Ovary (tissue), 10 donors: ENCODE measurements at regions of chr10 and their contacts with region 1.

Region 1: DNA sequence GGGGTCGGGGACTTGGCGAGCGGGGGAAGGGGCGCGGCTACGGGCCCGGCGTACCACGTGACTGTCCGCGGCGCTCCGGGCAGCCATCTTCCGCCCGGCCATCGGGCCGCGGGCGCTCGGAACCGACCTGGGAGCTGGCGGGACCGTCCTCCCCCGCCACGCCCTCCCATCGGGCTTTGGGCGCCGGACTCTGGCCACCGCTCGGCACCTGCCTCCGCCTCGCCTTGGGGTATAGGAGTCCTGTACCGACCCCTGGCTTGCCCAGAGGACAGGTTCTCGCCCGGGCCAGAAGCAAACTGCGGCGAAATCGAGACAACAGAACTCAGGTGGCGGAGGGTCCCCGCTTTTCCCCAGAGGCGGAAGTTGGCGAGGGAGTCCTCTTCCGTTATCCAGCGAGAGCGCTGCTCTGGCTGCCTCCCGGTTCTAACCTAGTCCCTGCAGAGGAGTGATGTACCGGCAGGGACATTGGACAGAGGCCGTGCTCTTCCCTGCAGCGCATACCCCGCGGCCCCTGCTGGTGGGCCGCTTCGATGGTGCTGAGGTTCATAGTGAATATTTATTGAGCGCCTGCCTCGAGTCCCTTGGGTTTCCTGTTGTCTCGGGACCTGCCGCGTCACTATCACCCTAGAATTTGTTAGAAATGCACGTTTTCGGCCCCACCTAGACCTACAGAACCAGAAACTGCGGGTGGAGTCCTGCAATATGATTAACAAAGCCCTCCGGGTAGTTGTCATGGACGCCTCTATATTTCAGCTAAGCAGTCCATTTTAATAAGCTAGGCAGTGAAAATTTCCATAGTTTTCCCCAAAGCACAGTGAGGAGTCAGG is 1.3 kb upstream of the SGMS1 start:
- DNase-seq: peak in 1 of 5 donors; percentile 67
- H3K4me3 ChIP-seq: peak overlapping the region; percentile 67
- H3K27ac ChIP-seq: peak overlapping the region; percentile 95 to 100
- H3K4me1 ChIP-seq: no peaks in the 10 kb centered on the region
- H3K27me3 ChIP-seq: no peaks in the 10 kb centered on the region
- CTCF ChIP-seq: peak; percentile 64 to 76 (median 67)
- EP300 ChIP-seq: no peak
- POLR2A ChIP-seq: peak; percentile 8

Region 2: GRCh38 chr10:50417886-50418830 is 206.9 kb before region 1 on chr10:
- intact Hi-C with region 1: loop called in 2 of 4 experiments (anchors 5 to 10 kb)
- DNase-seq: peak; percentile 36 to 71 (median 55)
- H3K4me3 ChIP-seq: peak overlapping the region; percentile 70
- H3K27ac ChIP-seq: peak overlapping the region in 1 of 2 donors; percentile 9
- H3K4me1 ChIP-seq: peaks cover 5% of the 10 kb centered on the region
- H3K27me3 ChIP-seq: no peaks in the 10 kb centered on the region
- CTCF ChIP-seq: no peak
- EP300 ChIP-seq: no peak
- POLR2A ChIP-seq: no peak

Region 3: DNA sequence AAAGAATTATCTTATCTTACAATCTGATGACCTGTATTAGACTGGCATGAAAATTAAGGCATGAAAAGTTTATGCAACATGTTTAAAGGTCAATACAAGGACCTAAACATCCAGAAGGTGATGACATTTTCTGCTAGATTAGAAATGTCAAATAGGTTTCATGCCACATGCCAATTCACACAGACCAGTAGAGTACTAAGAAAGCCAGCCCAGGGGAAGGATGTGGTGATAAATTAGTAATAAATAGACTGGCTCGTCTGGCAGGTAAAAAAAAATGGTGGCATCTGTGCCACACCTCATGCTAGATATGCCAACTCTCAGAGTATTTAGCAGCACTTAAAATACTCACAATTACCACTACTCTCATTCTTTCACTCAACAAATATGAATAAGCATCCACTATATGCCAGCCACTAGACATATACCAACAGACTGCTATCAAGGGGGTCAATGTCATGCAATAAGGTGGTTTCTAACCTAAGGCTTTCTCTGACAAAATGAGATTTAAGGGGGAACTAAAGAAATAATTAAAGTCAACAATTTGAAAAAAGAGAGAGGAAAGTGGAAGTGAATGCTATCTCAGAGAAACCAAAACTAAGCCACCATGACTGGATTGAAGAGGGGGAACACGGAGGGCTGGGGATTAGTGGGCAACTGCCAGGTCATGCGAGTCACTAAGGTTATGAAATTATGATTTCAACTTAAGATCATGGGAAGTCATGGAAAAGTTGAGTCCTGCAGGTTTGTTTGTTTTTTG is 84.8 kb before region 1 on chr10:
- intact Hi-C with region 1: no loop called
- DNase-seq: no peak
- H3K4me3 ChIP-seq: no peak overlapping the region
- H3K27ac ChIP-seq: no peak overlapping the region
- H3K4me1 ChIP-seq: peaks cover 9% of the 10 kb centered on the region
- H3K27me3 ChIP-seq: no peaks in the 10 kb centered on the region
- CTCF ChIP-seq: no peak
- EP300 ChIP-seq: no peak
- POLR2A ChIP-seq: no peak

Region 4: DNA sequence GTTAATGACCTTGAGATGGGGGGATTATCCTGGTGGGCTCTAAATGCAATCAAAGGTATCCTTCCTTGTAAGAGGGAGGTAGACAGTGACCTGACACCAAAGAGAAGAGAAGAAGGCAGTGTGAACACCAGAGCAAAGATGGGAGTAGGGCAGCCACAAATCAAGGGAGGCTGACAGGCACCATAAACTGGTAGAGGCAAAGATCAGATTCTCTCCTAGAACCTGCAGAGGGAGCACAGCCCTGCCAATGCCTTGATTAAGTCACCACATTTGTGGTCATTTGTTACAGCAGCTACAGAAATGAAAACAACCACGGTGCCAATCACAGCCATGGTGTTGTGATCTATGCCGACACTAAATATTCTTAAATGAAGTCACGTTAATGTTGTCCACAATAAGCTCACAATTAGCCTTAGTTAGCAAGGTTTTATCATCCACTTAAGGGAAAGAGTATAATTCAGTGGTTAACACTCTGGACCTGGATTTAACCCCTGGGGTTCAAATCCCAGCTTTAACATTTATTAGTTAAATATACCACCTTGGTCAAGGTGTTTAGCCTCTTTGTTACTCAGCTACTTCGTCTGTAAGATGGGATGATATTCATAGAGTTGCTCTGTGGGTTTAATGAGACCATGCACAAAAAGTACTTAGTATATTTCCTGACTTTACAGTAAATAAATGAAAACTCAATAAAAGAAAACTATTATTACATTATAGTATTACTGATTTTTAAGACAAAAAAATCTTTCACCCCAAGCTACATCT is 72.1 kb before region 1 on chr10:
- intact Hi-C with region 1: loop called (anchors 5 to 10 kb)
- DNase-seq: no peak
- H3K4me3 ChIP-seq: no peak overlapping the region
- H3K27ac ChIP-seq: peak overlapping the region in 1 of 2 donors; percentile 10
- H3K4me1 ChIP-seq: peaks cover 22% of the 10 kb centered on the region
- H3K27me3 ChIP-seq: no peaks in the 10 kb centered on the region
- CTCF ChIP-seq: no peak
- EP300 ChIP-seq: no peak
- POLR2A ChIP-seq: no peak